Activated B cell treated with CpG ODN at 0.5 μM for 24 hours (primary cell): ENCODE measurements at regions of chr3 and their contacts with region 1.

Region 1: GRCh38 chr3:185942907-185943759 is 5.3 kb upstream of the TRA2B start:
- DNase-seq: peak; percentile 78
- ATAC-seq: peak; percentile 99
- H3K4me3 Mint-ChIP-seq: peak overlapping the region; percentile 58
- H3K27ac Mint-ChIP-seq: peak overlapping the region; percentile 61
- H3K4me1 Mint-ChIP-seq: peaks cover 16% of the 10 kb centered on the region
- H3K27me3 Mint-ChIP-seq: peaks cover 7% of the 10 kb centered on the region
- CTCF ChIP-seq: peak; percentile 99

Region 2: GRCh38 chr3:185929192-185930151 is 13.7 kb before region 1 on chr3:
- CTCF ChIA-PET with region 1: interaction called, 31 read pairs
- POLR2A ChIA-PET with region 1: interaction called, 45 read pairs
- intact Hi-C with region 1: no loop called
- DNase-seq: no peak
- ATAC-seq: no peak
- H3K4me3 Mint-ChIP-seq: peak overlapping the region; percentile 99
- H3K27ac Mint-ChIP-seq: peak overlapping the region; percentile 81
- H3K4me1 Mint-ChIP-seq: peaks cover 91% of the 10 kb centered on the region
- H3K27me3 Mint-ChIP-seq: no peaks in the 10 kb centered on the region
- CTCF ChIP-seq: no peak

Region 3: GRCh38 chr3:185958626-185959025 is 15.5 kb after region 1 on chr3:
- CTCF ChIA-PET with region 1: interaction called, 24 read pairs
- POLR2A ChIA-PET with region 1: no interaction called
- intact Hi-C with region 1: no loop called
- DNase-seq: no peak
- ATAC-seq: no peak
- H3K4me3 Mint-ChIP-seq: no peak overlapping the region
- H3K27ac Mint-ChIP-seq: no peak overlapping the region
- H3K4me1 Mint-ChIP-seq: no peaks in the 10 kb centered on the region
- H3K27me3 Mint-ChIP-seq: peaks cover 23% of the 10 kb centered on the region
- CTCF ChIP-seq: no peak

Region 4: GRCh38 chr3:185976977-185977678 is 34.0 kb after region 1 on chr3:
- CTCF ChIA-PET with region 1: interaction called, 15 read pairs
- POLR2A ChIA-PET with region 1: interaction called, 4 read pairs
- intact Hi-C with region 1: loop called (anchors 1 kb)
- DNase-seq: peak; percentile 76
- ATAC-seq: peak; percentile 96
- H3K4me3 Mint-ChIP-seq: no peak overlapping the region
- H3K27ac Mint-ChIP-seq: no peak overlapping the region
- H3K4me1 Mint-ChIP-seq: peaks cover 6% of the 10 kb centered on the region
- H3K27me3 Mint-ChIP-seq: peaks cover 4% of the 10 kb centered on the region
- CTCF ChIP-seq: peak; percentile 64

Region 5: DNA sequence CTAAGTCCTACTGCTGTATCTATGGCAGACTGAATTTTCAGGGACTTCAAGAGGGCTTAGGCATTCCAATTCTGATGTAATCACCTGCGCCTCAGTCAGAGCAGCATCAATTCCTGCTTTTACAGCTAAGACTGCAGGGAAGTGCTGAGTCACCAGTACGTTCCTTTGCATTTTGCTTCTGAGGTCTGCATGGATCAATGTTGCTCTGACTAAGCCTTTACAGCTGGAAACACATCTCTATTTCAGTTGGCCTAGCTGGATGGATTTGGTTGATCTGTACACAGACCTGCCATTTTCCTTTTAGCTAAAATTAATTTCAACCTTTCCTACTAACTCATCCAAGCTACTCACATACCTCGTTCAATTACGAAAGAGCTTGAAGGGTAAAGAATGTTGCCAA is 114.5 kb after region 1 on chr3:
- CTCF ChIA-PET with region 1: no interaction called
- POLR2A ChIA-PET with region 1: no interaction called
- intact Hi-C with region 1: no loop called
- DNase-seq: no peak
- ATAC-seq: no peak
- H3K4me3 Mint-ChIP-seq: no peak overlapping the region
- H3K27ac Mint-ChIP-seq: no peak overlapping the region
- H3K4me1 Mint-ChIP-seq: no peaks in the 10 kb centered on the region
- H3K27me3 Mint-ChIP-seq: no peaks in the 10 kb centered on the region
- CTCF ChIP-seq: no peak

Region 6: GRCh38 chr3:186540221-186540834 is 597.2 kb after region 1 on chr3:
- CTCF ChIA-PET with region 1: interaction called, 27 read pairs
- POLR2A ChIA-PET with region 1: interaction called, 6 read pairs
- intact Hi-C with region 1: no loop called
- DNase-seq: peak; percentile 55
- ATAC-seq: peak; percentile 88
- H3K4me3 Mint-ChIP-seq: no peak overlapping the region
- H3K27ac Mint-ChIP-seq: no peak overlapping the region
- H3K4me1 Mint-ChIP-seq: peaks cover 35% of the 10 kb centered on the region
- H3K27me3 Mint-ChIP-seq: no peaks in the 10 kb centered on the region
- CTCF ChIP-seq: no peak

Region 7: DNA sequence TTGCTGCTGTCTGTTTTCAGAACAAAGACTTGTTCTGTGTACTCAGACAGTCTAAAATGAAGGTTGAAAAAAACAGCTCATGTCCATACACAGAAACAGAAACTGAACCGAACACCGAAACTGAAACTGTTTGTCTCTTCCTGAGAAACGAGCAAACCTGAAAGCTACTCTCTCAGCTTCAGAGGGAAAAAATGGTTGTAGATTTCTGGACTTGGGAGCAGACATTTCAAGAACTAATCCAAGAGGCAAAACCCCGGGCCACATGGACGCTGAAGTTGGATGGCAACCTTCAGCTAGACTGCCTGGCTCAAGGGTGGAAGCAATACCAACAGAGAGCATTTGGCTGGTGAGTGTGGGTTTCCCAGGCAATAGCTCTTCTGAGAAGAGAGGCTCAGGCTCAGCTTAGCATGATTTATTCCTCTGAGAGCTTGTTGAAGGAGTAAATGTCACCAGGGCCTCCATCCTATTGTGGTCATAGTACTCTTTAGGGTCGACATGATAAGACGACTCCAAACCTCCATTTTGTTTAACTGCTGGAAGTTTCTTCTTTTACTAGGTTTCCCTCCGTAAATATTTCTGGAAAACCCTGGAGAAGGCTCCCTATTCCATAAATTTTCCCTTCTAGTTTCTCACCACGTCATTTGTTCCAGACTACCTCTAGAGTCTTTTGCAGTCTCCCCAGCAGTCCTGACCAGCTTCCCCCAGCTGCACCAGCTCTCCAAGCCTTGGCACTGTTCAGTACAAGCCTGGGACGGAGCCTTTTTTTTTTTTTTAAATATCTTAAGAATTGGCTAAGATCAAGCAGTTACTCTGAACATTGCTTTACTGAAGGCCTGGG is 1425.3 kb after region 1 on chr3 and contains the start of gene RTP4:
- CTCF ChIA-PET with region 1: no interaction called
- POLR2A ChIA-PET with region 1: no interaction called
- intact Hi-C with region 1: loop called (anchors 10 kb)
- DNase-seq: peak; percentile 23
- ATAC-seq: peak; percentile 70
- H3K4me3 Mint-ChIP-seq: peak within 1 kb of the TSS; percentile 97
- H3K27ac Mint-ChIP-seq: peak within 1 kb of the TSS; percentile 96
- H3K4me1 Mint-ChIP-seq: peaks cover 22% of the 10 kb centered on the region
- H3K27me3 Mint-ChIP-seq: no peaks in the 10 kb centered on the region
- CTCF ChIP-seq: no peak
- total RNA-seq, gene RTP4: 7.4 and 9.0 TPM in 2 replicates